CD14-positive monocyte (primary cell): ENCODE measurements at regions of chr9 and their contacts with region 1.

Region 1: GRCh38 chr9:114505187-114506081 is at the start of gene WHRN:
- DNase-seq: peak; percentile 81 to 89 (median 84)
- H3K4me3 ChIP-seq: peak within 1 kb of the TSS; percentile 31 to 73 (median 44)
- H3K4me3 Mint-ChIP-seq: peak within 1 kb of the TSS; percentile 80 to 91
- H3K27ac ChIP-seq: no peak within 1 kb of the TSS
- H3K27ac Mint-ChIP-seq: peak within 1 kb of the TSS in 6 of 7 donors; percentile 72 to 88 (median 83)
- H3K4me1 ChIP-seq: peaks cover 16 to 20% of the 10 kb centered on the region in 2 donors
- H3K4me1 Mint-ChIP-seq: peaks cover 10% of the 10 kb centered on the region
- H3K27me3 ChIP-seq: peaks cover 38 to 78% of the 10 kb centered on the region in 2 donors
- H3K27me3 Mint-ChIP-seq: peaks cover 58 to 74% (median 67%) of the 10 kb centered on the region in 3 donors
- CTCF ChIP-seq: no peak
- polyA plus RNA-seq, gene WHRN: 0.13 to 0.59 (median 0.30) TPM

Region 2: GRCh38 chr9:114487607-114488300 is 17.7 kb before region 1 on chr9:
- intact Hi-C with region 1: no loop called
- DNase-seq: peak; percentile 58 to 74 (median 62)
- H3K4me3 ChIP-seq: no peak overlapping the region
- H3K4me3 Mint-ChIP-seq: no peak overlapping the region
- H3K27ac ChIP-seq: no peak overlapping the region
- H3K27ac Mint-ChIP-seq: peak overlapping the region in 1 of 7 donors; percentile 62
- H3K4me1 ChIP-seq: peaks cover 13 to 15% of the 10 kb centered on the region in 2 donors
- H3K4me1 Mint-ChIP-seq: peaks cover 25% of the 10 kb centered on the region
- H3K27me3 ChIP-seq: no peaks in the 10 kb centered on the region
- H3K27me3 Mint-ChIP-seq: peaks cover 0 to 6% (median 2%) of the 10 kb centered on the region in 3 donors
- CTCF ChIP-seq: peak; percentile 94

Region 3: GRCh38 chr9:114587385-114588202 is 82.2 kb after region 1 on chr9 and contains the start of gene ATP6V1G1:
- intact Hi-C with region 1: loop called in 1 of 2 experiments (anchors 5 kb)
- DNase-seq: peak; percentile 99 to 100 (median 99)
- H3K4me3 ChIP-seq: peak within 1 kb of the TSS; percentile 67 to 89 (median 87)
- H3K4me3 Mint-ChIP-seq: peak within 1 kb of the TSS; percentile 96 to 99
- H3K27ac ChIP-seq: peak within 1 kb of the TSS; percentile 96
- H3K27ac Mint-ChIP-seq: peak within 1 kb of the TSS; percentile 97 to 100 (median 99)
- H3K4me1 ChIP-seq: peaks cover 48 to 55% of the 10 kb centered on the region in 2 donors
- H3K4me1 Mint-ChIP-seq: peaks cover 46% of the 10 kb centered on the region
- H3K27me3 ChIP-seq: no peaks in the 10 kb centered on the region
- H3K27me3 Mint-ChIP-seq: no peaks in the 10 kb centered on the region
- CTCF ChIP-seq: no peak
- polyA plus RNA-seq, gene ATP6V1G1: 146 to 226 (median 214) TPM

Region 4: DNA sequence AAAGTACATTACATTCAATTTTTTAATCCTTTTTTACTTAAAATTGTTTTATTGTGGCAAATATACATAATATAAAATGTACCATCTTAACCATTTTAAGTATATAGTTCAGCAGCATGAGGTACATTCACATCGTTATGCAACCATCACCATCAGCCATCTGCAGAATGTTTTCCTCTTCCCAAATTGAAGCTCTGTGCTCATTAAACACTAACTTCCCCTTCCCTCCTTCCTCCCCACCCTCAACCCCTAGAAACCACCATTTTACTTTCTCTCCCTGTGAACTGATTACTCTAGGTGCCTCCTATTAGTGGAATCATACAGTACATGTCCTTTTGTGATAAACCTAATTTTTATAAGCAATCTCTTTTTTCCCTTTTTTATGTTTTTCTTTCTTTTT is 136.5 kb after region 1 on chr9:
- intact Hi-C with region 1: no loop called
- DNase-seq: peak; percentile 47 to 62 (median 61)
- H3K4me3 ChIP-seq: no peak overlapping the region
- H3K4me3 Mint-ChIP-seq: no peak overlapping the region
- H3K27ac ChIP-seq: peak overlapping the region in 1 of 2 donors; percentile 75
- H3K27ac Mint-ChIP-seq: peak overlapping the region; percentile 22 to 82 (median 48)
- H3K4me1 ChIP-seq: peaks cover 9 to 14% of the 10 kb centered on the region in 2 donors
- H3K4me1 Mint-ChIP-seq: peaks cover 16% of the 10 kb centered on the region
- H3K27me3 ChIP-seq: no peaks in the 10 kb centered on the region
- H3K27me3 Mint-ChIP-seq: peaks cover 0 to 2% (median 1%) of the 10 kb centered on the region in 3 donors
- CTCF ChIP-seq: no peak

Region 5: GRCh38 chr9:115213818-115214334 is 708.4 kb after region 1 on chr9:
- intact Hi-C with region 1: no loop called
- DNase-seq: no peak
- H3K4me3 ChIP-seq: no peak overlapping the region
- H3K4me3 Mint-ChIP-seq: no peak overlapping the region
- H3K27ac ChIP-seq: no peak overlapping the region
- H3K27ac Mint-ChIP-seq: no peak overlapping the region
- H3K4me1 ChIP-seq: no peaks in the 10 kb centered on the region
- H3K4me1 Mint-ChIP-seq: no peaks in the 10 kb centered on the region
- H3K27me3 ChIP-seq: no peaks in the 10 kb centered on the region
- H3K27me3 Mint-ChIP-seq: peaks cover 0 to 4% (median 3%) of the 10 kb centered on the region in 3 donors
- CTCF ChIP-seq: no peak